ENCODE measurements at regions of chr17 and their contacts with region 1.

Region 1: GRCh38 chr17:29807520-29808351 is 122.3 kb downstream of the SSH2 start:
- DNase-seq: peak; percentile 76
- ATAC-seq: peak; percentile 77
- H3K4me3 ChIP-seq: peak overlapping the region in 1 of 5 experiments; percentile 9
- H3K4me3 Mint-ChIP-seq: peak overlapping the region; percentile 4
- H3K27ac ChIP-seq: no peak overlapping the region
- H3K27ac Mint-ChIP-seq: no peak overlapping the region
- H3K4me1 ChIP-seq: peaks cover 23 to 29% of the 10 kb centered on the region in 2 donors
- H3K4me1 Mint-ChIP-seq: peaks cover 27% of the 10 kb centered on the region
- H3K27me3 ChIP-seq: no peaks in the 10 kb centered on the region
- H3K27me3 Mint-ChIP-seq: no peaks in the 10 kb centered on the region
- CTCF ChIP-seq: peak; percentile 94

Region 2: DNA sequence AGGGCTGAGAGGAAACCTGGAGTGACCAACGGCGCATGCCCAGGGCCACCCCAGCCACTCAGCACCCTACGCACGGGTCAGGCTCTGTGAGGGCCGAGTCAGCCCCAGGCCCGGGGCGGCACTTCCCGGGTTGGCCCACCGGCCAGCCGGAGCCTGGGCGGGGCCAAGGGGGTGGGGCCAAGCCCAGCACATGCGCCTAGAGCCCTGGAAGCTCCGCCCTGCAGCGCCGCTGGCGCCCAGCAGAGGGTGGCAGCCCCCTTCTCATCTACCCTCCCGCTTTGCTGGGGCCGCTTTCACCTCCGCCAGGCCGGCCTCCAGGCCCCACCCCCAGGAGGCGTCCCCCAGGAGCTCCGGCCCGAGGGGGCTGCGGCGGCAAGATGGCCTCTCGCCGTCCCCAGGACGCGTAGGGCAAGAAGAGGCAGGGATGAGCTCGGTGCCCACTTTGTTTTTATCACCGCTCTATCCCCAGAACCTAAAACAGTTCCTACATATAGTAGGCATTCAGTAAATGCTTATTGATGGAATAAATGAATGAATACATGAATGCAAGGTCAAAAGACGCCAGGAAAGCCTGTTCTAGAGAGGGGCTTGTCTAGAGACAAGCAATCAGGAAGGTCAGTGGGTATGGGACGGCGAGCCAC is 658.8 kb before region 1 on chr17:
- CTCF ChIA-PET with region 1: no interaction called
- POLR2A ChIA-PET with region 1: no interaction called
- intact Hi-C with region 1: no loop called
- DNase-seq: peak; percentile 96
- ATAC-seq: peak; percentile 96
- H3K4me3 ChIP-seq: peak overlapping the region; percentile 23 to 65 (median 49)
- H3K4me3 Mint-ChIP-seq: peak overlapping the region; percentile 88
- H3K27ac ChIP-seq: peak overlapping the region; percentile 85 to 88
- H3K27ac Mint-ChIP-seq: peak overlapping the region; percentile 93
- H3K4me1 ChIP-seq: peaks cover 34 to 39% of the 10 kb centered on the region in 2 donors
- H3K4me1 Mint-ChIP-seq: peaks cover 46% of the 10 kb centered on the region
- H3K27me3 ChIP-seq: no peaks in the 10 kb centered on the region
- H3K27me3 Mint-ChIP-seq: no peaks in the 10 kb centered on the region
- CTCF ChIP-seq: peak; percentile 96

Region 3: GRCh38 chr17:29579866-29580771 is 227.6 kb before region 1 on chr17:
- CTCF ChIA-PET with region 1: interaction called, 4 read pairs
- POLR2A ChIA-PET with region 1: no interaction called
- intact Hi-C with region 1: loop called (anchors 1 kb)
- DNase-seq: peak; percentile 93
- ATAC-seq: peak; percentile 96
- H3K4me3 ChIP-seq: no peak overlapping the region
- H3K4me3 Mint-ChIP-seq: no peak overlapping the region
- H3K27ac ChIP-seq: no peak overlapping the region
- H3K27ac Mint-ChIP-seq: peak overlapping the region; percentile 87
- H3K4me1 ChIP-seq: peaks cover 19 to 23% of the 10 kb centered on the region in 2 donors
- H3K4me1 Mint-ChIP-seq: peaks cover 27% of the 10 kb centered on the region
- H3K27me3 ChIP-seq: no peaks in the 10 kb centered on the region
- H3K27me3 Mint-ChIP-seq: no peaks in the 10 kb centered on the region
- CTCF ChIP-seq: peak; percentile 79

Region 4: GRCh38 chr17:29821897-29822296 is 14.2 kb after region 1 on chr17:
- CTCF ChIA-PET with region 1: interaction called, 10 read pairs
- POLR2A ChIA-PET with region 1: no interaction called
- intact Hi-C with region 1: no loop called
- DNase-seq: no peak
- ATAC-seq: no peak
- H3K4me3 ChIP-seq: no peak overlapping the region
- H3K4me3 Mint-ChIP-seq: no peak overlapping the region
- H3K27ac ChIP-seq: no peak overlapping the region
- H3K27ac Mint-ChIP-seq: no peak overlapping the region
- H3K4me1 ChIP-seq: no peaks in the 10 kb centered on the region
- H3K4me1 Mint-ChIP-seq: no peaks in the 10 kb centered on the region
- H3K27me3 ChIP-seq: no peaks in the 10 kb centered on the region
- H3K27me3 Mint-ChIP-seq: no peaks in the 10 kb centered on the region
- CTCF ChIP-seq: no peak

Region 5: DNA sequence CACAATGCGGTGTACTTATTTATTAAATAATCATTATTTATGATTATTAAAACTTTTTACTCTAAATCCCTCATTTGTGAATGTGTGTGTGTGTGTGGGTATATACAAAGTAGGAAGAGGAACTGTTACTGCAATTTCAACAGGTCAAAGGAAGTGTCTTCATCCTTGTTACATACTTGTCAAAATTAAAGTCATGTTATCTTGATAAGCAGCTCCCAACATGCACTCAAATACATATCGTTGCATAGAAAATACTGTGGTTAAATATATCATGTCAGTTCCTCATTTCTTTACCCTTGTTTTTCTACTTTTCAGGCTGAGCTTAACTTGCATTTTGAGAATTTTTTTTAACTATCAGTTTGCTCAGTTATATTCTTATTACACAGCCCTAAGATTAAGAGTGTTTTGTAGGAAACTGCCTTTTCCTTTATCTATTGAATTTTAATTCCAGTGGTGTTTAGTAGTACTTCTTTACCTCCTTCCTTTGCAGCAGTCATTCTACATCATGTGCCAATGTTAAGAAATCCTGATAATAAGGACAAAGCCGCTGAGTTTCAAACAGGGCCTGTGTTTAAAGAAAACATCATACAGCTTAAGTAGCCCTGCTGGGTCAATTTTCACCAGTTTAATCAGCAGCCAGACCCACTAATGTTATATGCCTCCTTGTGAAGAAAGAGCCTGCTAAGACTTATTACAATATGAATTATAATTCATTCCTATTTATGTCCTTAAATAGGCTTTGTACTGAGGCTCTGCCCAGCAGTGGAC is 140.9 kb after region 1 on chr17:
- CTCF ChIA-PET with region 1: interaction called, 18 read pairs
- POLR2A ChIA-PET with region 1: no interaction called
- intact Hi-C with region 1: no loop called
- DNase-seq: peak; percentile 39
- ATAC-seq: peak; percentile 74
- H3K4me3 ChIP-seq: peak overlapping the region in 1 of 5 experiments; percentile 15
- H3K4me3 Mint-ChIP-seq: peak overlapping the region; percentile 11
- H3K27ac ChIP-seq: peak overlapping the region; percentile 25 to 67
- H3K27ac Mint-ChIP-seq: peak overlapping the region; percentile 77
- H3K4me1 ChIP-seq: peaks cover 25 to 32% of the 10 kb centered on the region in 2 donors
- H3K4me1 Mint-ChIP-seq: peaks cover 33% of the 10 kb centered on the region
- H3K27me3 ChIP-seq: no peaks in the 10 kb centered on the region
- H3K27me3 Mint-ChIP-seq: no peaks in the 10 kb centered on the region
- CTCF ChIP-seq: no peak

Region 6: GRCh38 chr17:30021708-30022317 is 214.1 kb after region 1 on chr17:
- CTCF ChIA-PET with region 1: interaction called, 100 read pairs
- POLR2A ChIA-PET with region 1: no interaction called
- intact Hi-C with region 1: loop called (anchors 1 kb)
- DNase-seq: peak; percentile 69
- ATAC-seq: peak; percentile 75
- H3K4me3 ChIP-seq: no peak overlapping the region
- H3K4me3 Mint-ChIP-seq: no peak overlapping the region
- H3K27ac ChIP-seq: no peak overlapping the region
- H3K27ac Mint-ChIP-seq: no peak overlapping the region
- H3K4me1 ChIP-seq: no peaks in the 10 kb centered on the region
- H3K4me1 Mint-ChIP-seq: peaks cover 1% of the 10 kb centered on the region
- H3K27me3 ChIP-seq: no peaks in the 10 kb centered on the region
- H3K27me3 Mint-ChIP-seq: peaks cover 3% of the 10 kb centered on the region
- CTCF ChIP-seq: peak; percentile 91

Measured in B cell (primary cell).